ENCODE measurements at regions of chr12 and their contacts with region 1.

Region 1: DNA sequence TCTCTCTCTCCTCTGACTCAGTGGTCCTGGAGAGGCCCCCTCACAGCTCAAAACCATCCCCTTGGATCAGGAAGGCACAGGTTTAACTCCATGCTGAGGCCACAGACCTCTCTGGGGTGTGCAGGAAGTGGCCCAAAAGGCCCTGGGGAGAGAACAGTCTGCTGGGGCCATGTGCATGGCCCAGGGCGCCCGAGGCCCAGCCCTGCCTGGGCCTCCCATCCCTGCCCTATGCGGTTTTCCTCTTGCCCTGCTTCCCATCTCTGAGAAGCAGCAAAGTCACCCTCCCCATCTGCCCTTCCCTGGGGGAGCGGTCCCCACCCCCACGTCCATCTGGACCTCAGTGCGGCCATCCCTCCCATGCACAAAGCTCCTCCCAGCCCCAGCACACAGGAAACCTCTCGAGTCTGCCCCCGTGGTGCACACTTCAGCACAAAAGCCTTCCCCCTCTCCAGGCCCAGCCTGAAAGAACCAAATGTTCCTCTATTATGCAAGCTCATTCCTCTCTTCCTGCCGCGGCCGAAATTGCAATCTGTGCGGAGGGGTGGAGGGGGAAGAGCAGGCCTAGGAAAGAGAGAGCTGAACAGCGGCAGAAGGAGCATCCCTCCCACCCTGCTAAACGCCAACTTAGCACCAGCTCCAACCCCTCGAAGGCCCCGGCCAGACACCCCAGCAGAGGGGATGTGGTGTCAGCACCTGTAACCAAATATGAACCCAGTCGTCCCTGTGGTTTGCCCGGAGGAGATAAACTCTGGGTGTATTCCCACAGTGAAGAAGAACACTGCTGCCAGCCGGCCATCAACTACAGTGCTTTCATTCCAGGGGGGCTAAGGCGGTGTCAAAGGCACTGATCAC is 108.5 kb downstream of the SCARB1 start:
- DNase-seq: peak; percentile 65
- H3K4me3 ChIP-seq: no peak overlapping the region
- H3K27ac ChIP-seq: peak overlapping the region; percentile 23
- H3K4me1 ChIP-seq: no peaks in the 10 kb centered on the region
- H3K27me3 ChIP-seq: no peaks in the 10 kb centered on the region
- CTCF ChIP-seq: no peak

Region 2: DNA sequence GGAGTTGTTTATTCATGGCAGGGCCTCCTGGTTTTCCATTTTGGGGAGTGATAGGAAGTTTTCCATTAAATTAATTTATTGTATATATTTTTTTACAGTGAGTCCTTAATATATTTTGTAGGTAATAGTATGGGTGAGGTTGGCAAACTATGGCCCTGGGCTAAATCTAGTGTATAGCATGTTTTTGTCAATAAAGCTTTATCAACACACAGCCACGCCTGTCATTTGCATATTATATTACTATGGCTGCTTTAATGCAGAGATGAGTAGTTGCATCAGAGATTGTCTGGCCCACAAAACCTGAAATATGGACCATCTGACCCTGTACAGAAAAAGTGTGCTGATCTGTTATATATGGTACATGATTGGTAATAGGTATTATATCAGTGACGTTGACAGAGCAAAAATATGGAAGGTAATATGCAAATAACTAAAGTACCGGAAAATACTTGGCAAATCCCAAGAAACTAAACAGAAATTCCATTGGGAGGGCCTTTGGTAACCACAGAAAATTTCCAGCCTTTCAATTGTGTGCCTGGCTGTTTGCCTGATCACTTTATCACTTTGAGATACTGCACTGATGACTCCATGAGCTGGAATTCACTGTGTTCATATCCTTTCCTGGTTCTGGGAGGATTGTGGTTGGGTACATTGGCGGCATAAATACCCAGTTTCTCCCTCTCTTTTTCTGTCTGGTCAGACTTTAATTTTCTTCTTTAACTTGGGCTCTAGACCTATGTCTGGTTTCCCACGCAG is 522.0 kb before region 1 on chr12:
- intact Hi-C with region 1: no loop called
- DNase-seq: no peak
- H3K4me3 ChIP-seq: no peak overlapping the region
- H3K27ac ChIP-seq: no peak overlapping the region
- H3K4me1 ChIP-seq: peaks cover 3% of the 10 kb centered on the region
- H3K27me3 ChIP-seq: no peaks in the 10 kb centered on the region
- CTCF ChIP-seq: no peak

Region 3: GRCh38 chr12:124480469-124481256 is 274.5 kb before region 1 on chr12:
- intact Hi-C with region 1: no loop called
- DNase-seq: peak; percentile 72
- H3K4me3 ChIP-seq: no peak overlapping the region
- H3K27ac ChIP-seq: no peak overlapping the region
- H3K4me1 ChIP-seq: no peaks in the 10 kb centered on the region
- H3K27me3 ChIP-seq: no peaks in the 10 kb centered on the region
- CTCF ChIP-seq: no peak

Region 4: GRCh38 chr12:124567661-124568373 is 187.4 kb before region 1 on chr12:
- intact Hi-C with region 1: loop called (anchors 5 kb)
- DNase-seq: peak; percentile 93
- H3K4me3 ChIP-seq: peak overlapping the region; percentile 51
- H3K27ac ChIP-seq: peak overlapping the region; percentile 69
- H3K4me1 ChIP-seq: peaks cover 5% of the 10 kb centered on the region
- H3K27me3 ChIP-seq: no peaks in the 10 kb centered on the region
- CTCF ChIP-seq: no peak

Region 5: DNA sequence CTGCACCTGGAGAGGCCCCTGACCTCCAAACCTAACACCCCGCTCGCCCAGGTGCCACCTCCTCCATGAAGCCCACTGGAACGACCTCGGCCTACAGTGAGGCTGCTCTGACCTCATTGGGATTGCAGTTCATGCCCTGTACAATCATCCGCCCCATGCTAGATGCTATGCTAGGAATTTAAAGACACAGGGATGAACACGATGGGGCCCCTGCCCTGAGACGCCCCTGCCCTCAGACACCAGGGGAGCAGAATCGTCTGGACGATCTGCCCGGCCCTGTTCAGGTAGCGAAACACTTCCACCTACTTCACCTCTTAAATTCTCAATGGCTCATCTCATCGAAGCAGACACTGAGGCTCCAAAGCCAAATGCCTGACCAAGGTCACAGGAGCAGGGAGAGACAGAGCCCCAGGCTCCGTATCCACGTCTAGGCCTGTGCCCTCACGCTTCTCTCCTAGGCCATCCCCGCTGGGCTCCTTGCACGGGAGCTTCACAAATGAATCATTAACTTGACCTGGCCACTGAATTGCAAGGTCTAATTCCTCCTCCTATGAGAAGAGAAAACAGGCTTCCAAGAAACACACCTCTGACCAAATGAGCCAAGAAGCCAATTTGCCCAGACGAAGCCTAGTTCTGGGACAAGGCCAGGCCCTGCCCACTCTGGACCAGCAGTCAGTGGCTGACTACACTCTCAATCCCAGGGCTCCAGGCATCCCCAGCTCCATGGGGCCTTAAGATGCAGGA is 73.3 kb after region 1 on chr12:
- intact Hi-C with region 1: no loop called
- DNase-seq: peak; percentile 79
- H3K4me3 ChIP-seq: no peak overlapping the region
- H3K27ac ChIP-seq: peak overlapping the region; percentile 53
- H3K4me1 ChIP-seq: peaks cover 13% of the 10 kb centered on the region
- H3K27me3 ChIP-seq: no peaks in the 10 kb centered on the region
- CTCF ChIP-seq: no peak

Region 6: DNA sequence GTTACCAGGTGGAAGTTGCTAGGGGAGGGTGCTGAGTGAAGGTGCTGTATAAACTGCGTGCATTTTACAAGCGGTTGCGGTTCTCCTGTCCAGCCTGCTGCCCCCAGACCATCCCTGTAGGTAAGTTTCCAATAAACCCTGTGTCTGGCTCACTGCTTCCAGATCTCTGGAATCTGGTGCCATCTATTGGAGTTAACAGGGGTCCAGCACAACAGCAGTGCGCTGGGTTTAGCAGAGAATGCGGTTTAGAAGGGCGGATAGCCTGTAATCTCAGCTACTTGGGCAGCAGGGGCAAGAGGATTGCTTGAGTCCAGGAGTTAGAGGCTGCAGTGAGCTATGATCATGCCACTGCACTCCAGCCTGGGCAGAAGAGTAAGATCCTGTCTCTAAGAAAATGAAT is 314.9 kb after region 1 on chr12:
- intact Hi-C with region 1: no loop called
- DNase-seq: no peak
- H3K4me3 ChIP-seq: no peak overlapping the region
- H3K27ac ChIP-seq: no peak overlapping the region
- H3K4me1 ChIP-seq: peaks cover 6% of the 10 kb centered on the region
- H3K27me3 ChIP-seq: no peaks in the 10 kb centered on the region
- CTCF ChIP-seq: no peak